Activated T-helper 2 cell treated with anti-CD3 and anti-CD28 coated beads, Interferon-gamma antibody, Interleukin-2, Interleukin-4, amounts not matched to agents 10 μg/mL and 5 μg/mL and 100 μg/mL, durations not matched to agents 14 hours and 24 hours and 36 hours (primary cell): ENCODE measurements at regions of chr4 and their contacts with region 1.

Region 1: GRCh38 chr4:67327262-67328017 is 217.9 kb downstream of the CENPC start:
- DNase-seq: peak; percentile 20
- H3K4me3 Mint-ChIP-seq: no peak overlapping the region
- H3K27ac Mint-ChIP-seq: no peak overlapping the region
- H3K4me1 Mint-ChIP-seq: no peaks in the 10 kb centered on the region
- H3K27me3 Mint-ChIP-seq: peaks cover 4% of the 10 kb centered on the region

Region 2: DNA sequence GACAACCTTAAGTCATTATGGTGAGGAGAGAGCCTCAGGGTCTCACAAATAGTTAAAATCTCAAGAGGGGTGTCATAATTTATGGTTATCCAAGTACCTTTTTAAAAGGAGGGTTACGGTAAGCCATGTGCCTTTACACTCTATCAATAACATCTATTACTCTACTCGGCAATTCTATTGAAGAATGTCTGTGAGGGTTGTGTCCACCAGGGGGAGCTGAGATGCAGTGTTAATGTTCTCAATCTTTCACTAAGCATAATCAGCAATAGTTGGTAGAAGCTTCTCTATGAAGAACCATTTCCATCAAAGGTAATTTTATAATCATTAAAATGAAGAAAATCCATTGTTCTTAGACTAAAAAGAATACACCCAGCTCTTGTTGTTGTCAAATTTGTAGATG is 239.5 kb before region 1 on chr4:
- intact Hi-C with region 1: loop called (anchors 1 kb)
- DNase-seq: peak; percentile 14
- H3K4me3 Mint-ChIP-seq: no peak overlapping the region
- H3K27ac Mint-ChIP-seq: no peak overlapping the region
- H3K4me1 Mint-ChIP-seq: no peaks in the 10 kb centered on the region
- H3K27me3 Mint-ChIP-seq: no peaks in the 10 kb centered on the region

Region 3: GRCh38 chr4:67131224-67131623 is 196.2 kb before region 1 on chr4:
- intact Hi-C with region 1: no loop called
- DNase-seq: no peak
- H3K4me3 Mint-ChIP-seq: no peak overlapping the region
- H3K27ac Mint-ChIP-seq: peak overlapping the region; percentile 56
- H3K4me1 Mint-ChIP-seq: peaks cover 5% of the 10 kb centered on the region
- H3K27me3 Mint-ChIP-seq: no peaks in the 10 kb centered on the region